ENCODE measurements at regions of chr1 and their contacts with region 1.

Region 1: GRCh38 chr1:51535006-51535592 is 16.0 kb upstream of the EPS15 start:
- DNase-seq: peak; percentile 54
- H3K4me3 Mint-ChIP-seq: no peak overlapping the region
- H3K27ac Mint-ChIP-seq: no peak overlapping the region
- H3K4me1 Mint-ChIP-seq: peaks cover 12% of the 10 kb centered on the region
- H3K27me3 Mint-ChIP-seq: no peaks in the 10 kb centered on the region

Region 2: GRCh38 chr1:51287966-51288365 is 247.1 kb before region 1 on chr1:
- CTCF ChIA-PET with region 1: no interaction called
- POLR2A ChIA-PET with region 1: no interaction called
- intact Hi-C with region 1: no loop called
- DNase-seq: no peak
- H3K4me3 Mint-ChIP-seq: no peak overlapping the region
- H3K27ac Mint-ChIP-seq: no peak overlapping the region
- H3K4me1 Mint-ChIP-seq: peaks cover 23% of the 10 kb centered on the region
- H3K27me3 Mint-ChIP-seq: no peaks in the 10 kb centered on the region

Region 3: DNA sequence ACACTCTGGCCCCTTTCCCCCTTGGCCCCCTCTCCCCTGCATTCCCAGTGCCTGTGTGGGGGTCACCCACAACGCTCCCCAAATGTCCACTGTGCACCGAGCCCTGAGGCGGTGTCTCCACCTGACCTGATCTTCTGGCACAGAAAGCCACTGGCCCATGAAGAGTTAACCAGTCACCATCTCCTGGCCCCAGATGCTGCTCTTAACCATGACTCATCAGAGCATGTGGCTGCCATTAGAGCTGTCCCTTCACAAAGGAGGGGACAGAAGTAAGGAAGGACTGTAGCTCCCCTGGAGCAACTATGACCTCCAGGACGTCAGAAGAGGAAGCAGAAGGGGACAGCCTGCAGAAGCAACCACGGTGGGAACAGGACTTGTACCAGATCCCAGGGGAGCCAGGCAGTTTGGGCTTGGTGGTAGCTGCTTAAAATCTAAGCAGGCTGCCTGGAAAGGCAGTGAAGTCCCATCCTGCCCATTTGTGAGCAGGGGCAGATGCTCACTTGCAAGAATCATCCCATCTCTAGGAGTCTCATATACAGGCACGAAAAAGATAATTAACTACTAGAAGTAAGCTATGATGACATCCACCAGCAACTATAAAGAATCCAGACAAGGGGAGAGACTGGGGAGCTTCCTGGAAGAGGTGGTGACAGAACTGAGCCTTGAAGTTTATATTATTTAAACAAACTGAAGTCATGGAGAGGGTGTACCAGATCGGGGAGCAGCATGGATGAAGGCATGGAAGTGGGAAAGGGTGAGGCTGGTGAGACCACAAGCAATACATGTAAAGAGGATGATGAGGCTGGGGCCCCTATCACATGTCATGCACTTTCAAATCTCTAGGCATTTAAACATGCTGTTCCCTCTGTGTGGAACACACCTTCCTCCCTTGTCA is 203.6 kb before region 1 on chr1:
- CTCF ChIA-PET with region 1: no interaction called
- POLR2A ChIA-PET with region 1: no interaction called
- intact Hi-C with region 1: loop called (anchors 10 kb)
- DNase-seq: peak; percentile 21
- H3K4me3 Mint-ChIP-seq: peak overlapping the region; percentile 63
- H3K27ac Mint-ChIP-seq: no peak overlapping the region
- H3K4me1 Mint-ChIP-seq: peaks cover 18% of the 10 kb centered on the region
- H3K27me3 Mint-ChIP-seq: peaks cover 29% of the 10 kb centered on the region

Region 4: DNA sequence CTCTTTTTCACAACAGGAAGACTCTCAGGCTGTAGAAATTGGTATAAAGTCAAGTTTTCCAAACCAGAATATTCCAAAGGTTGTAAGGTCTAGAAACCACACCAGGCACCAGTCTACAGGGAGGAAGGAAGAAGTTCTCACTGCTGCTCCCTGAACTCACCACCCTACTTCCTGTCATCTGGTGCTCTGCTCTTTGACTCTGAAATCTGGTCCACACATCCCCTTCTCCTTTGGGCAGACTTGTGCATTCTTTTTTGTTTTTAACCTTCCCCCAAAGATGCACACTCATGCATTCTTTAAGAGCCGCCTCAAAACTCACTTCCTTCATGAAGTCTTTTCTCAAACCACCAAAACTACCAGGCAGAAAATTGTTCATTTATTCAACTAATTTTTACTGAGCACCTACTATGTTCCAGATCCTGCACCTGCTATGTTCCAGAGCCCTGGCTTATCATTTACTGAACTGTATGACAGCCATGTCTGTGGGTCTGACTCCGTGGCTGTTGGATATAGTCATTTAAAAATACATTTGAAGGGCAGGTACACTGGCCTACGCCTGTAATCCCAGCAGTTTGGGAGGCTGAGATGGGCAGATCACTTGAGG is 14.0 kb after region 1 on chr1:
- CTCF ChIA-PET with region 1: no interaction called
- POLR2A ChIA-PET with region 1: no interaction called
- intact Hi-C with region 1: no loop called
- DNase-seq: no peak
- H3K4me3 Mint-ChIP-seq: no peak overlapping the region
- H3K27ac Mint-ChIP-seq: peak overlapping the region; percentile 13
- H3K4me1 Mint-ChIP-seq: peaks cover 18% of the 10 kb centered on the region
- H3K27me3 Mint-ChIP-seq: no peaks in the 10 kb centered on the region

Region 5: DNA sequence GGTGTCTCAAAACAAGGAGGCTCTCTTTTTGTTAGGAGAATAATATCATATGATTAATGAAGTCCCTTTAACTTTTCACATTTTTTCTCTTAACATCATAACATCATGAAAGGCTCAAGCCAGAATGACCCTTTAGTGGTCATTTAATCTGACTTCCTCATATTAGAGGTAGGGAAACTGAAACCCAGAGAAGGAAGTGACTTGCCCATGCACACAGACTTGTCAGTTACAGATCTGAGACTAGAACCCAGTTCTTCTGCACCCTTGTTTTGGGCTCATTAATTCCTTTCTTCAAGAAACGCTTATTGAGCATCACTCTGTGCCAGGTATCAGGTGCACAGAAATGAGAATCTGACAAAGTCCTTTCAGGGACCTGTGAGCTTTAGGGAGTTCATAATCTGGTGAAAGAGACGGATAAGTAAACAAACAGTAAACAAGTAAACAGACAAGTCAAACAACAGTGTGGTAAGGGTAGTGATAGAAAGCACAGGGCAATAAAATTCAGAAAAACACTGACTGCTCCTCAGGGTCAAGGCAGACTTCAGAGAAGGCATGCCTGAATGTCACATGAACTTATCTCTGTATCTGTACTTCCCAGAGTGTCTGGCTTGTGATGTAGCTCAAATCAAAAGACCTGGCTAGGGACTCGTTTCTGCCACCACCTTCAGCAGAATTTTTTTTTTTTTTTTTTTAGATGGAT is 43.4 kb after region 1 on chr1:
- CTCF ChIA-PET with region 1: no interaction called
- POLR2A ChIA-PET with region 1: no interaction called
- intact Hi-C with region 1: no loop called
- DNase-seq: no peak
- H3K4me3 Mint-ChIP-seq: no peak overlapping the region
- H3K27ac Mint-ChIP-seq: no peak overlapping the region
- H3K4me1 Mint-ChIP-seq: peaks cover 17% of the 10 kb centered on the region
- H3K27me3 Mint-ChIP-seq: no peaks in the 10 kb centered on the region

Measured in activated CD4-positive, alpha-beta memory T cell treated with anti-CD3 and anti-CD28 coated beads for 36 hours (primary cell).